WTC11 (cell line): ENCODE measurements at regions of chr5 and their contacts with region 1.

Region 1: DNA sequence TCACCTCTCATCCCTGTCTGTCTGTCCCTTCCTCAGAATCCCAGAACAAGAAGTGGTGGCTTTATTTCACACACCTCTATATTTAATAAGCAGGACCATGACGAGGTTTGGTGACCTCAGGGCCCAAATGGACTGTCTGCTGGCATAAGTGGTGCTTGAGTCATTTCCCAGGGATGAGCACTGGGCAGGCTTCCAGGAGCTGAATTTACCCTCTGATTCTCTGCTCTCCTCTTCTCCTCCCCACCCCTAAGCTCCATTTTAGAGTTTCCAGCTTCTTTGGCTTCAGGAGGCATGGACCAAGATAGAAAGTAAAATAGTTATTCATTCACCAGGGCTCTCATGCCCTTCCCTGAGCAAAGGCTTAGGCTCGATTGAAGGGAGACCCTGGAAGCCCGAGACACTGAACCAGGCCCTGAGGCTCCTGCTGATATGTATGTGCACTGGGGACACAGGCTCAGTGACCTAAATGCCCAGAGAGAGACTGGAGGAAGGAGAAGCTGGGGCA is 69.1 kb downstream of the PPARGC1B start:
- DNase-seq: no peak
- ATAC-seq: no peak
- H3K4me3 Mint-ChIP-seq: no peak overlapping the region
- H3K27ac Mint-ChIP-seq: no peak overlapping the region
- H3K4me1 Mint-ChIP-seq: peaks cover 51% of the 10 kb centered on the region
- H3K27me3 Mint-ChIP-seq: no peaks in the 10 kb centered on the region
- CTCF ChIP-seq: no peak

Region 2: GRCh38 chr5:149775785-149776184 is 23.4 kb before region 1 on chr5:
- CTCF ChIA-PET with region 1: interaction called, 15 read pairs
- POLR2A ChIA-PET with region 1: no interaction called
- DNase-seq: no peak
- ATAC-seq: peak; percentile 18; the same call in 1 of the 2 replicates
- H3K4me3 Mint-ChIP-seq: no peak overlapping the region
- H3K27ac Mint-ChIP-seq: no peak overlapping the region
- H3K4me1 Mint-ChIP-seq: peaks cover 70% of the 10 kb centered on the region
- H3K27me3 Mint-ChIP-seq: no peaks in the 10 kb centered on the region
- CTCF ChIP-seq: peak; percentile 58